PC-9 (cell line): ENCODE measurements at regions of chr7 and their contacts with region 1.

Region 1: DNA sequence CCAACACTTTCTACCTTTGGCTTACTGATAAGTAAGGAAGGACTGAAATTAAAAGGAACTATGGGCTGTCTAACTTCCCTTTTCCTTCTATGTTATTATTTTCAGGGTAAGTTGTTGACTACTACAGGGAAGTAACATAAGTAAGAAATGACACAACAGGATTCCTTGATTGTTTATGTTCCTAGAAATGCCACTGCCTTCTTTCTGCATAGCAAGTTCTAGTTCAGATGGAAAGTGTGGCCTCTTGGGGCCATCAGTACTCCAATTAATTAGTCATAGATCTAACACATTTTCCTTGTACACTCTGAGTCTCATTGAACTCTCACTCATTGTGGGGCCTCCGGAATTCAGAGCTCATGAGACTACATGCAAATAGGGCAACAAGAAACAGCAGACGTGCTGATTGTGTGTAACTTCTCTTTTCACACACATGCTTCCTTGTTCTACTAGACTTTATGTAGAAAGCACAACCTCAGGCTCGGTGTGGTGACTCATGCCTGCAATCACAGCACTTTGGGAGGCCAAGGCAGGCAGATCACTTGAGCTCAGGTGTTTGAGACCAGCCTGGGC is 35.3 kb upstream of the HIBADH start:
- DNase-seq: peak; percentile 37 to 91
- H3K4me3 ChIP-seq: no peak overlapping the region
- H3K27ac ChIP-seq: peak overlapping the region; percentile 52
- H3K4me1 ChIP-seq: peaks cover 22% of the 10 kb centered on the region
- H3K27me3 ChIP-seq: no peaks in the 10 kb centered on the region
- CTCF ChIP-seq: no peak

Region 2: GRCh38 chr7:27686315-27686714 is 11.6 kb before region 1 on chr7:
- CTCF ChIA-PET with region 1: no interaction called
- POLR2A ChIA-PET with region 1: no interaction called
- intact Hi-C with region 1: no loop called
- DNase-seq: no peak
- H3K4me3 ChIP-seq: no peak overlapping the region
- H3K27ac ChIP-seq: no peak overlapping the region
- H3K4me1 ChIP-seq: peaks cover 7% of the 10 kb centered on the region
- H3K27me3 ChIP-seq: no peaks in the 10 kb centered on the region
- CTCF ChIP-seq: no peak

Region 3: DNA sequence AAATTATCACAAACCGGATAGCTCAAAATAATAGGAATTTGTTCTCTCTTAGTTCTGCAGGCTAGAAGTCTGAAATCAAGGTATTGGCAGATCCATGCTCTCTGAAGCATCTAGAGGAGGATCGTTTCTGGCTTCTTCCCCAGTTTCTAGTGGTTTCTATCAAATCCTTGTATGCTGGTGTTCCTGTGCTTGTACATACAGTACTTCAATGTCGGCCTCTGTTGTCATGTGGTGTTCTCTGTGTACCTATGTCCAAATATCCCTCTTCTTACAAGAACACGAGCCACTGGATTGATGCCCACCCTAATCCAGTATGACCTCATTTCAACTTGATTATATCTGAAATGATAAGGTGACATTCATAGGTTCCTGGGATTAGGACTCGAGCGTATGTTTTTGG is 32.2 kb after region 1 on chr7:
- CTCF ChIA-PET with region 1: no interaction called
- POLR2A ChIA-PET with region 1: interaction called, 10 read pairs
- intact Hi-C with region 1: no loop called
- DNase-seq: no peak
- H3K4me3 ChIP-seq: no peak overlapping the region
- H3K27ac ChIP-seq: no peak overlapping the region
- H3K4me1 ChIP-seq: peaks cover 12% of the 10 kb centered on the region
- H3K27me3 ChIP-seq: no peaks in the 10 kb centered on the region
- CTCF ChIP-seq: no peak

Region 4: DNA sequence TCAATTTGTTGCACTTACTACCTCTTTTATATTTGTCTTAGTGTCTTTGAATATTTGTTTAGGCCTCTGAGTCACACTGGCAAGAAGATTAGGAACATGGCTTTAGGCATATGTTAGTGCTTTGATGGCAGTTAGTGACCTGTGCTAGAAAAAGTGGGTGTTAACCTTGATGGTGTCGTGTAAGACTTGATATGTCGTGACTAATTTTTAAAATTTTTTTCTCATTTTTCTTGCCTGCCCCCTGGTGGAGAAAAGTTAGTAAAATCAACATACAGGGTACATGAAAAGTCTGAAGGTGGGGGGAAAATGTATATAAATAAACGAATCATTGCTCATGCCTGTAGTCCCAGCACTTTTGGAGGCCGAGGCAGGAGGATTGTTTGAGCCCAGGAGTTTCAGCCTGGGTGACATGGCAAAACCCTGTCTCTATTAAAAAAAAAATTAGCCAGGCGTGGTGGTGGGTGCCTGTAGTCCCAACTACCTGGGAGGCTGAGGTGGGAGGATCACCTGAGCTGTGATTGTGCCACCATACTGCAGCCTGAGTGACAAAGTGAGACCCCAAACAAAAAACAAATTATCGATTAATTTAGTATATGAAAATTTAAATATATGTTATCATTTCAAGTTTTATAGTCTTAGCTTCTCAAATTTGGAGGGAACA is 86.6 kb after region 1 on chr7:
- CTCF ChIA-PET with region 1: no interaction called
- POLR2A ChIA-PET with region 1: interaction called, 13 read pairs
- intact Hi-C with region 1: no loop called
- DNase-seq: peak; percentile 53 to 98
- H3K4me3 ChIP-seq: no peak overlapping the region
- H3K27ac ChIP-seq: no peak overlapping the region
- H3K4me1 ChIP-seq: peaks cover 25% of the 10 kb centered on the region
- H3K27me3 ChIP-seq: no peaks in the 10 kb centered on the region
- CTCF ChIP-seq: peak; percentile 92

Region 5: DNA sequence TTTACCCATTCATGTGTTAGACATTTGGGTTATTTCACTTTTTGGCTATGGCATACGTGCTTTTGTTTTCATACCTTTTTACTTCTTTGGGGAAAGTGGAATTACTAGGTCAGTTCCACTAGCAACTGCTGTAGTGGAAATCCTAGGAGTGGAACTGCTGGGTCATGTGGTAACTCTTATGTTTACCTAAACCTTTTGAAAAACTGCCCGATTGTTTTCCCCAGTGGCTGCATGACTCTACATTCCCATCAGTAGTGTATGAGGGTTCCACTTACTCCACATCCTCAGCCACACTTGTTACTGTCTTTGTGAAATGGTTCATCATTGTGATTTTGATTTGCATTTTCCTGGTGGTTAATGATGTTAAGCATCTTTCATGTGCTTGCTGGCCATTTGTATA is 124.3 kb after region 1 on chr7:
- CTCF ChIA-PET with region 1: no interaction called
- POLR2A ChIA-PET with region 1: no interaction called
- intact Hi-C with region 1: no loop called
- DNase-seq: no peak
- H3K4me3 ChIP-seq: no peak overlapping the region
- H3K27ac ChIP-seq: no peak overlapping the region
- H3K4me1 ChIP-seq: no peaks in the 10 kb centered on the region
- H3K27me3 ChIP-seq: no peaks in the 10 kb centered on the region
- CTCF ChIP-seq: no peak

Region 6: GRCh38 chr7:27952456-27953285 is 254.7 kb after region 1 on chr7:
- CTCF ChIA-PET with region 1: no interaction called
- POLR2A ChIA-PET with region 1: no interaction called
- intact Hi-C with region 1: no loop called
- DNase-seq: no peak
- H3K4me3 ChIP-seq: no peak overlapping the region
- H3K27ac ChIP-seq: no peak overlapping the region
- H3K4me1 ChIP-seq: no peaks in the 10 kb centered on the region
- H3K27me3 ChIP-seq: no peaks in the 10 kb centered on the region
- CTCF ChIP-seq: no peak

Region 7: GRCh38 chr7:28211006-28211405 is 513.1 kb after region 1 on chr7:
- CTCF ChIA-PET with region 1: no interaction called
- POLR2A ChIA-PET with region 1: no interaction called
- intact Hi-C with region 1: no loop called
- DNase-seq: no peak
- H3K4me3 ChIP-seq: no peak overlapping the region
- H3K27ac ChIP-seq: no peak overlapping the region
- H3K4me1 ChIP-seq: no peaks in the 10 kb centered on the region
- H3K27me3 ChIP-seq: no peaks in the 10 kb centered on the region
- CTCF ChIP-seq: no peak